ENCODE measurements at regions of chr20 and their contacts with region 1.

Region 1: GRCh38 chr20:38221119-38221589 is 39.4 kb downstream of the KIAA1755 start:
- DNase-seq: peak; percentile 92
- H3K4me3 Mint-ChIP-seq: no peak overlapping the region
- H3K27ac Mint-ChIP-seq: no peak overlapping the region
- H3K4me1 Mint-ChIP-seq: no peaks in the 10 kb centered on the region
- H3K27me3 Mint-ChIP-seq: no peaks in the 10 kb centered on the region

Region 2: GRCh38 chr20:38057351-38057972 is 163.7 kb before region 1 on chr20:
- intact Hi-C with region 1: loop called (anchors 1 kb)
- DNase-seq: peak; percentile 92
- H3K4me3 Mint-ChIP-seq: peak overlapping the region; percentile 22
- H3K27ac Mint-ChIP-seq: peak overlapping the region; percentile 80
- H3K4me1 Mint-ChIP-seq: peaks cover 19% of the 10 kb centered on the region
- H3K27me3 Mint-ChIP-seq: no peaks in the 10 kb centered on the region

Region 3: GRCh38 chr20:38073307-38074071 is 147.7 kb before region 1 on chr20:
- intact Hi-C with region 1: loop called (anchors 2 kb)
- DNase-seq: peak; percentile 84
- H3K4me3 Mint-ChIP-seq: no peak overlapping the region
- H3K27ac Mint-ChIP-seq: no peak overlapping the region
- H3K4me1 Mint-ChIP-seq: peaks cover 7% of the 10 kb centered on the region
- H3K27me3 Mint-ChIP-seq: no peaks in the 10 kb centered on the region

Region 4: GRCh38 chr20:38275815-38276550 is 54.8 kb after region 1 on chr20:
- intact Hi-C with region 1: no loop called
- DNase-seq: no peak
- H3K4me3 Mint-ChIP-seq: no peak overlapping the region
- H3K27ac Mint-ChIP-seq: no peak overlapping the region
- H3K4me1 Mint-ChIP-seq: no peaks in the 10 kb centered on the region
- H3K27me3 Mint-ChIP-seq: peaks cover 11% of the 10 kb centered on the region